Mucosa of descending colon (tissue), 3 donors: ENCODE measurements at regions of chr3 and their contacts with region 1.

Region 1: GRCh38 chr3:168047190-168047795 is 48.4 kb downstream of the GOLIM4 start:
- DNase-seq: no peak
- ATAC-seq: peak; percentile 87
- H3K4me3 ChIP-seq: no peak overlapping the region
- H3K4me1 ChIP-seq: peaks cover 26% of the 10 kb centered on the region
- CTCF ChIP-seq: peak; percentile 51

Region 2: GRCh38 chr3:167929968-167930367 is 117.3 kb before region 1 on chr3:
- intact Hi-C with region 1: loop called in 1 of 2 experiments (anchors 10 kb)
- DNase-seq: no peak
- ATAC-seq: no peak
- H3K4me3 ChIP-seq: no peak overlapping the region
- H3K4me1 ChIP-seq: no peaks in the 10 kb centered on the region
- CTCF ChIP-seq: no peak

Region 3: DNA sequence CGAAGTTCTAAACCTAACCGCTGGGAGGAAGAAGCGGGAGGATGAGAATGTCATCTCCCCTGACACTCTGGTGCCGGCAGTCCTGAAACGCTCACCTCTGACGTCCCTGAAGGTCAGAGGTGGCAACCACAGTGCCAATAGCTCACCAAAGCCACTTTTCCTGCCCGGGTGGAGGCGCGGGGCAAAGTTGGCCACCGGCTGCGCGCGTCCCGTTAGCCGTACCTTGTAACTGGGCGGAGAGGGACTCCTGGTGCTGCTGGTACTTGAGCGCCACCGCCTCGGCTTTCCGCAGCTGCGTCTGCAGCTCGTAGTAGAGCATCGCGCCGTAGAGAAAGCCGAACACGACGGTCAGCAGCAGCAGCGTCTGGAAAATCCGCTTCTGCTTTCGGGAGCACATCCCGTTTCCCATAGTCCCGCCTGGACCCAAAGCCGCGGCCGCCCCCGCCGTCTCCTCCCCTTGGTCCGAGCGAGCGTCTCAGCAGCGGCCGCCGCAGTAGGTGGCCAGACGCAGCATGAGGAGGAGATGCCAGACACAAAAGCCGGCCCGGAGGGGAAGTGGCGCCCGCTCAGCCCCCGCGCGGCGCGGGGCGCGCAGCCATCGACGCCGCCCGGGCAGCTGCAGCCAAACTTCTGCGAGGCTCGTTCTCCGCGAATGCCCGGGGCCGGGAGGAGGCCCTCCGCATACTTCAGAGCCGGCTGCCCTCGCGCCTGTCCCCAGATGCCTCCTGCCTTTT is 47.8 kb after region 1 on chr3:
- intact Hi-C with region 1: loop called in 1 of 2 experiments (anchors 5 kb)
- DNase-seq: peak; percentile 65 to 83 (median 78)
- ATAC-seq: peak; percentile 42
- H3K4me3 ChIP-seq: peak overlapping the region; percentile 79
- H3K4me1 ChIP-seq: peaks cover 36% of the 10 kb centered on the region
- CTCF ChIP-seq: no peak

Region 4: DNA sequence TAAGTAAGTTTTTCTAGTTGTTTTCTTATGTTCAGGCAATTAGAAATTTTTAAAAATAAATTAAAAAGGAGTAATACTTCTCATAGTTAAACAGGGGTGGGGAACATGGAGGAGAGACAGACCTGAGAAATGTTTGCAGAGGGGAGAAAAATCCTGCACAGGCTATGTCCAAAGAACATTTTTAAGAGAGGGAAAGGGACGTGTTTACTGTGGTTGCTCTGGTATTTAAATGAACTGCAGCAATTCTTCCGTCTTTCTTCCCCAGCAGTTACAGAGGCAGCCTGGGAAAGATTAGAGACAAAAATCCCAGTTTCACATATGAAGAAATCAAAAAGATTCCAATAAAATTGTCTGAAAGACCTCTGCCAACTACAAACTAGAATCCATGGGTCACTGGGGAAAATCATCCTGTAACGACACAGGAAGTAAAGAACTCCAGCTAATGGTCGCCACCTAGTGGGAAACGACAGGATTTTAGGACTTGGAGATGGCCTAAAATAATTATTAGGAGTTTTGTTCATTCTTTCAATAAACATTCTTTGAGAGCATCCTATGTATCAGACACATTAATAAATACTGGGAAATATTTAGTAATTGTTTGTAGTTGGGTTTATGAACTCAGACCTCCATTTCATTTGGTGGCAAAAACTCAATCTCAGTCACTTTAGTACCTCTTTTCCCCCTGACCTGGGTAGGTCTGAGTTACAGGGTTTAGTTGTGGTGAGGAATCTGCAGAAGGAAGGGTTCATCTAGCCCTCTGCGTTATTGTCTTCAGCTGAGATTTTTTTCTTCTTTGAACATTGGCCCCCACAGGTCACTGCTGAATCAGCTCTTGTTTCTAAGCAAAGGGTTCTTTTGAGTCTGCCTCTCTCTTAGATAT is 118.3 kb after region 1 on chr3:
- intact Hi-C with region 1: loop called (anchors 1 to 5 kb)
- DNase-seq: peak in 1 of 3 donors; percentile 85
- ATAC-seq: peak; percentile 82
- H3K4me3 ChIP-seq: no peak overlapping the region
- H3K4me1 ChIP-seq: no peaks in the 10 kb centered on the region
- CTCF ChIP-seq: peak; percentile 57

Region 5: GRCh38 chr3:168490981-168491380 is 443.7 kb after region 1 on chr3:
- intact Hi-C with region 1: no loop called
- DNase-seq: no peak
- ATAC-seq: no peak
- H3K4me3 ChIP-seq: no peak overlapping the region
- H3K4me1 ChIP-seq: no peaks in the 10 kb centered on the region
- CTCF ChIP-seq: no peak